ENCODE measurements at regions of chr20 and their contacts with region 1.

Region 1: DNA sequence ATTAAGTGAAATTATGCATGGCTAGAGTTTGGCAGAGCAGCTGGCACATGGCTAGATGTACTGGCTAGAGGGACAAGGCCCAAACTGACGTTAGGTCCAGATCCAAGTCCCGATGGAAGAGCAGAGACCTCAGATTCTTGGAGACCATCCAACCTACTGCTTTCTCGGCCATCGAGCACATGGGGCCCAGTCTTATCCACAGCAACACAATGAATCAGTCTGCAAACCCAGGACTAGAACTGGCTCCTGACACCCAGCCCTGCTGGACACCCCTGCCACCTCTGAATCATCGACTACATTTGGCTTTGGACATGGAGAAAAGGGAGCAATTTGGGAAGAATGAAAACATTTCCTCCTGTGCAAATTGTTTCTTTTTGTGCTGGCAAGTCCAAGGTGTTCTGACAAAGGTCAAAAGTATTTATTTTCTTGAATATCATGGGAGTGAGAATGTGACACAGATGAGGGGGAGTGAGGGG is 23.9 kb upstream of the YWHAB start:
- ATAC-seq: peak in 2 of 8 experiments; percentile 53 to 56
- H3K4me3 ChIP-seq: no peak overlapping the region
- H3K27ac ChIP-seq: no peak overlapping the region
- H3K4me1 ChIP-seq: peaks cover 16 to 17% of the 10 kb centered on the region in 2 donors

Region 2: GRCh38 chr20:44398303-44398702 is 463.3 kb before region 1 on chr20:
- in situ Hi-C with region 1: no loop called
- ATAC-seq: peak in 5 of 8 experiments; percentile 16 to 97 (median 83)
- H3K4me3 ChIP-seq: no peak overlapping the region
- H3K27ac ChIP-seq: no peak overlapping the region
- H3K4me1 ChIP-seq: no peaks in the 10 kb centered on the region

Region 3: DNA sequence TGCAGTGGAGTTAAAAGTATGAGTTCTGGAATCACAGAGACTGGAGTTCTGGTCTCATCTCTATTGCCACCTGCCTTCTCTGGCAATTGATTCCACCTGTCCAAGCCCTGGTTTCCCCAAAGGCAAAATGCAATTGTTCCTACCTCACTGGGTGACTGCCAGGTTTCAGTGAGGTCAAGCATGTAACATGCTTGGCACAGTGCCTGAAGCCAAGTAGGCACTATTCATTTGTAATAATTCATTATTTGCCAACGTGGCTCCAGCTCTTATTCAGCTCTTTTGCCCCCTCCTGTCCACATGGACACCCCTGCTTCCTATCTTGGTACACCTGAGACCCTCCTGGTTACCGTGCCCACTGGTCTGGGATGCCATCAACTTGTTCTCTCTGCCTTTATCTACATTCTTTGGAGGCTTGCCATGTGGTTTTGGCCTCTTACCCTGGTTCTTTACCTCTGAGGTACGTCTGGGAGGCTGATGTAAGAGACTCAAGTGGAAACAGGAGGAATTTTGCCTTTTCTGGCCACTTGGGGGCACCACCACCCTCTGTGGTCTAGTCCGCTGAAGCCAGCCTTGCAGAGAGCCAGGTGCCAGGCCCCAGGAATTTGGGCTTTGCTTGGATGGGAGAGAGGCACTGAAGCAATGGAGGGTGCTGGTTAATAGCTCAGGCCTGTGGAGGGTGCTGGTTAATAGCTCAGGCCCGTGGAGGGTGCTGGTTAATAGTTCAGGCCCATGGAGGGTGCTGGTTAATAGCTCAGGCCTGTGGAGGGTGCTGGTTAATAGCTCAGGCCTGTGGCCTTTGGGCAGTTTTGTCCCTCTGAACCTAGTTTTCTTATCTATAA is 114.2 kb before region 1 on chr20:
- in situ Hi-C with region 1: loop called in 3 of 9 experiments (anchors 10 to 25 kb)
- ATAC-seq: peak; percentile 42 to 83 (median 78)
- H3K4me3 ChIP-seq: no peak overlapping the region
- H3K27ac ChIP-seq: no peak overlapping the region
- H3K4me1 ChIP-seq: peaks cover 11 to 16% of the 10 kb centered on the region in 2 donors

Measured in motor neuron (in vitro differentiated cells).